CD8-positive, alpha-beta memory T cell (primary cell): ENCODE measurements at regions of chr14 and their contacts with region 1.

Region 1: DNA sequence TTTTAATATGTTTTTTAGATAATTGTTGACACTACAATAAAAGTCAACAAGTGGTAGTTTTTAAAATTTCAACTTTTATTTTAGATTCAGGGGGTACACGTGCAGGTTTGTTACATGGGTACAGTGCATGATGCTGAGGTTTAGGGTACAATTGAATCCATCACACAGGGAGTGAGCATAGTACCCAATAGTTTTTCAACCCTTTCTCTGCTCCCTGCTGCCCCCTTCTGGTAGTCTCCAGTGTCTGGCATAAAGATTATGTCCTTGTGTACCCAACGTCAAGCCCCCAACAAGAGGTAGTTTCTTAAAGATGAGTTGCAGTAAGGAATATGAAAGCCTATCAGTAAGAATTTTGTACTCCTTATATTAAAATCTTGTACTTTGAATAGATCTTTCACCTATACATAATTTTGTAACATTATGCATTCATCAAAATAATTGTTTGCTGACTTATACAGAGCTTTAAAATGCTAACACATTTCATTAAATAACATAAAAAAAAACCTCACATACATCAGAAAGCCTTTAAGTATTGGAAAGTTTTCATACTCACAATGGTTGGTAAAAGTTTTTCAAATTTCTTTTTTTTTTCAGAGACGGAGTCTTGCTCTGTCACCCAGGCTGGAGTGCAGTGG is 5.4 kb upstream of the RALGAPA1 start:
- DNase-seq: peak; percentile 64 to 83 (median 72)
- H3K4me3 ChIP-seq: no peak overlapping the region
- H3K4me3 Mint-ChIP-seq: no peak overlapping the region
- H3K27ac ChIP-seq: no peak overlapping the region
- H3K27ac Mint-ChIP-seq: peak overlapping the region in 2 of 8 donors; percentile 18 to 49
- H3K4me1 ChIP-seq: no peaks in the 10 kb centered on the region
- H3K4me1 Mint-ChIP-seq: peaks cover 4 to 11% (median 4%) of the 10 kb centered on the region in 3 donors
- H3K27me3 ChIP-seq: no peaks in the 10 kb centered on the region
- H3K27me3 Mint-ChIP-seq: peaks cover 0 to 2% of the 10 kb centered on the region in 2 donors

Region 2: GRCh38 chr14:35826218-35826951 is 11.9 kb after region 1 on chr14 and contains the start of gene BRMS1L:
- CTCF ChIA-PET with region 1: interaction called, 31 read pairs
- POLR2A ChIA-PET with region 1: interaction called, 6 read pairs
- DNase-seq: peak; percentile 95 to 98 (median 96)
- H3K4me3 ChIP-seq: peak within 1 kb of the TSS; percentile 79
- H3K4me3 Mint-ChIP-seq: peak within 1 kb of the TSS; percentile 88 to 98 (median 92)
- H3K27ac ChIP-seq: peak within 1 kb of the TSS; percentile 85
- H3K27ac Mint-ChIP-seq: peak within 1 kb of the TSS; percentile 64 to 95 (median 90)
- H3K4me1 ChIP-seq: peaks cover 18% of the 10 kb centered on the region
- H3K4me1 Mint-ChIP-seq: peaks cover 18 to 26% (median 24%) of the 10 kb centered on the region in 3 donors
- H3K27me3 ChIP-seq: no peaks in the 10 kb centered on the region
- H3K27me3 Mint-ChIP-seq: no peaks in the 10 kb centered on the region
- total RNA-seq, gene BRMS1L: 7.9 to 10.0 TPM